Stomach (tissue), 19 donors: ENCODE measurements at regions of chr6 and their contacts with region 1.

Region 1: DNA sequence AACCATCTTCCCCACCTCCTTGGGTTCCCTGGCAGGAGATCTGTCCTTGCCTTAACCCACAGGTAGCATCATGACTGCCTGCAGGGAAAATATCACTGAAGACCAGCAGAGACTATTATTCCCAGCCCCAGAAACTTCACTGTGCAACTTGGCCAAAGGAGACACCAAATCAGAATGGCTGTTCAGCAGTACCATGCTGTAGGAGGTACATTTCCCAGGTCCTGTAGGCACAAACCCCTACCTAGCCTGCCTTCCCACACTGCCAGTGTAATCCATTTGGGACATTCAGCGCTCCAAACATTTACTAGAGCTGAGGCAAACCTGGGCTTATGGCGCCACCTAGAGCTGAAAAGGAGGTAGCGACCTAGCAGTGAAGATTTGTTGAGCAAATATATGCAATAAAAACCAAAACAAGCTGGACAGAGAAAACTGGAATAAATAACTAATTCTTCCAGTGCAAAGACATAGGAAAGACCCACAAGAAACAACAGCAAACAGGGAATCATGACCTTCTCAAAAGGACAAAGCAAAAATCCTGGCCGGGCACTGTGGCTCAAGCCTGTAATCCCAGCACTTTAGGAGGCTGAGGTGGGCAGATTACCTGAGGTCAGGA is 60.3 kb downstream of the VTA1 start:
- DNase-seq: peak; percentile 54 to 60
- H3K4me3 ChIP-seq: no peak overlapping the region
- H3K27ac ChIP-seq: no peak overlapping the region
- H3K4me1 ChIP-seq: no peaks in the 10 kb centered on the region
- H3K27me3 ChIP-seq: no peaks in the 10 kb centered on the region
- CTCF ChIP-seq: peak in 5 of 7 experiments; percentile 57 to 76 (median 73)
- EP300 ChIP-seq: no peak
- POLR2A ChIP-seq: no peak

Region 2: DNA sequence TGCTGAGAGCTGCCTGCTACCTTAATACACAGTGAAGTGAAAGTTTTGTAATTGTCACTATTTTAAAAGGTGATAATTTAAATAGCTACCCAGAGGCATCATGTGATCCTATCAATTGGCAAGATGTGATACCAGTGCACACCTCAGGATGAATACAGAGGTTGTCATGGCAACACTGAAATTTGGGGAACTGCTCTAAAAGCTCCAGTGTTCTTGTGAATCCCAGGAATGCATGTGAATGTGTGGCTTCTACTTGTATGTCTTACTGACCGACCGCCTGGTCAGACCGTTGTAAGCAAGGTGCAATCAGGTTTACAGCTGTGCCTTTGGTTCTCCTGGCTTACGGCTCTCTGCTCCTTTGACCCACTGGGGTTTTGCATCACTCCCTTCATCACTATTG is 220.9 kb before region 1 on chr6:
- intact Hi-C with region 1: no loop called
- DNase-seq: no peak
- H3K4me3 ChIP-seq: no peak overlapping the region
- H3K27ac ChIP-seq: no peak overlapping the region
- H3K4me1 ChIP-seq: no peaks in the 10 kb centered on the region
- H3K27me3 ChIP-seq: no peaks in the 10 kb centered on the region
- CTCF ChIP-seq: no peak
- EP300 ChIP-seq: no peak
- POLR2A ChIP-seq: no peak

Region 3: DNA sequence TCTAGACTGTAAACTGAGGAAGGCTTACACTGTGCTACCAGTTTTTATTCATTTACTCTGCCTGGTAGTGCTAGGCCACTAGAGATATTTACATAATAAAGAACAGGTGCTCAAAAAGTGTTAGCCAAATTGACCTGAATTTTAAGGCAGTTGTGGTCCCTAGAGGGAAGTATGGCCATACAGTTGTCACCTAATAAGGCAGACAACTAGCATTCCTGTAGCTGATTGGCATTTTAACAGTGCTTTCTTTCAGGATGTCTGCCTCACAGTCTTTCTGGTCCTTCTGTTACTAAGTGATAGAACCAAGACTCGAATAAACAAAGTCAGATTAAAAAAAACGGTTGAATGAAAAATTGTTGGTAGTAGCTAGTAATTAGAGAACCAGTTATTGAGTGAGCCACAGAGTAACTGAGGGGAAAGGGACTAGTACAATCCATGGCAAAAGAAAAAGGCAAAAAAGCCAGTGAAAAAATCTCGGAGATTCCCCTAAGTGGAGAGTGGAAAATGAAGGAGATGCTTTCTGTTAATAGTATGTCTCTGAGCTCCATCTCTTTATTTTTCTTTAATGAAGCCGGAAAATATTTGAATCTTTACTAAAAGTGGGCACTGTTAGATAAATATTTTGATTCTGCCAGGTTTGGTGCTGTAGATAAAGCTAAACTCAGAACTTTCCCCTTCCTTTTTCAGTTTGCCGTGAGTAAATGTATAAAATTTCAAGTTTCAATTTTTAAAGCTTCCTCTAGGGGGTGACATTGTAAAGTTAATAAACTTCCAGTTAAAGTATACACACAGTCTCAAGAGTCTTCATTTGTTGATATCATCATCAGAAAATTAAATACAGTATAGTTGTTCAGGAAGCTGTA is 51.2 kb before region 1 on chr6:
- intact Hi-C with region 1: loop called (anchors 10 kb)
- DNase-seq: peak in 1 of 2 donors; percentile 43
- H3K4me3 ChIP-seq: no peak overlapping the region
- H3K27ac ChIP-seq: no peak overlapping the region
- H3K4me1 ChIP-seq: peaks cover 0 to 41% (median 18%) of the 10 kb centered on the region in 4 donors
- H3K27me3 ChIP-seq: no peaks in the 10 kb centered on the region
- CTCF ChIP-seq: peak in 3 of 7 experiments; percentile 9 to 44 (median 39)
- EP300 ChIP-seq: no peak
- POLR2A ChIP-seq: no peak